Heart right ventricle (tissue), 16 donors: ENCODE measurements at regions of chr4 and their contacts with region 1.

Region 1: GRCh38 chr4:25098964-25099891 is 61.0 kb downstream of the SEPSECS start:
- DNase-seq: peak; percentile 80 to 81
- ATAC-seq: peak; percentile 71 to 93 (median 89)
- H3K4me3 ChIP-seq: no peak overlapping the region
- H3K27ac ChIP-seq: peak overlapping the region; percentile 51 to 83 (median 78)
- H3K4me1 ChIP-seq: peaks cover 6 to 41% (median 34%) of the 10 kb centered on the region in 9 donors
- H3K27me3 ChIP-seq: no peaks in the 10 kb centered on the region
- CTCF ChIP-seq: no peak

Region 2: DNA sequence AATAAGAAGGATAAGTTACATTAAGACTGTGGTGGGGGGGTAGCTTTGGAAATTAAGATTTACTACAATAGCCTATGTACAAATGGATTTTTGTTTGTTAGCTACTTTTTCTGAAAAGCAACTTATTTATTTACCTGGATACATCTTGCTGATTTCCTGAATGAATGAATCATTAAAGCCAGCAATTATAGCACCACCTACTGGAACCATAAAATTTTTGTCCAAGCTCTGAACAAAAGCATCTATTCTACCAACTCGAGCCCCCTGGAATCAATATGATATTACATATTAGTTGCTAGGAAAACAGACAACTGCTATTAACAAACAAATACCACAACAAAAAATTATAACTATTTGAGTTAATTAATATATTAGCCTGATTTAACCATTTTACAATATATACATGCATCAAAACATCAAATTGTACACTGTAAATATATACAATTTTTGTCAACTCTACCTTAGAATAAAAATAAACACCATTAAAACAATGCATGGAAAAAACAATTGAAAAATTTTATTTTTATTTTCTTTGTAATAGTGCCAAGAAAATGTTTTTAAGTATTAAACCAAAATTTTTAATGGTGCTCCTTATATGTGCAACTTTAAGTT is 45.7 kb after region 1 on chr4:
- intact Hi-C with region 1: loop called in 1 of 10 experiments (anchors 10 kb)
- DNase-seq: no peak
- ATAC-seq: peak in 1 of 8 donors; percentile 38
- H3K4me3 ChIP-seq: no peak overlapping the region
- H3K27ac ChIP-seq: no peak overlapping the region
- H3K4me1 ChIP-seq: peaks cover 0 to 11% (median 0%) of the 10 kb centered on the region in 9 donors
- H3K27me3 ChIP-seq: no peaks in the 10 kb centered on the region
- CTCF ChIP-seq: peak; percentile 36 to 76 (median 63)